Ascending aorta (tissue), 2 donors: ENCODE measurements at regions of chr3 and their contacts with region 1.

Region 1: GRCh38 chr3:72447059-72447946 is 400.9 kb downstream of the SHQ1 start:
- DNase-seq: peak; percentile 39 to 94
- H3K4me3 ChIP-seq: peak overlapping the region; percentile 67 to 91
- H3K27ac ChIP-seq: peak overlapping the region; percentile 68 to 88
- H3K4me1 ChIP-seq: peaks cover 0 to 13% of the 10 kb centered on the region in 2 donors
- H3K27me3 ChIP-seq: no peaks in the 10 kb centered on the region
- CTCF ChIP-seq: no peak

Region 2: GRCh38 chr3:71955240-71956068 is 491.8 kb before region 1 on chr3:
- intact Hi-C with region 1: loop called (anchors 10 kb)
- DNase-seq: peak in 1 of 2 donors; percentile 85
- H3K4me3 ChIP-seq: no peak overlapping the region
- H3K27ac ChIP-seq: no peak overlapping the region
- H3K4me1 ChIP-seq: peaks cover 0 to 2% of the 10 kb centered on the region in 2 donors
- H3K27me3 ChIP-seq: no peaks in the 10 kb centered on the region
- CTCF ChIP-seq: peak; percentile 69 to 89 (median 71)

Region 3: GRCh38 chr3:72255791-72256559 is 191.3 kb before region 1 on chr3:
- intact Hi-C with region 1: loop called (anchors 5 kb)
- DNase-seq: no peak
- H3K4me3 ChIP-seq: no peak overlapping the region
- H3K27ac ChIP-seq: peak overlapping the region in 1 of 2 donors; percentile 31
- H3K4me1 ChIP-seq: peaks cover 9 to 19% of the 10 kb centered on the region in 2 donors
- H3K27me3 ChIP-seq: no peaks in the 10 kb centered on the region
- CTCF ChIP-seq: no peak

Region 4: DNA sequence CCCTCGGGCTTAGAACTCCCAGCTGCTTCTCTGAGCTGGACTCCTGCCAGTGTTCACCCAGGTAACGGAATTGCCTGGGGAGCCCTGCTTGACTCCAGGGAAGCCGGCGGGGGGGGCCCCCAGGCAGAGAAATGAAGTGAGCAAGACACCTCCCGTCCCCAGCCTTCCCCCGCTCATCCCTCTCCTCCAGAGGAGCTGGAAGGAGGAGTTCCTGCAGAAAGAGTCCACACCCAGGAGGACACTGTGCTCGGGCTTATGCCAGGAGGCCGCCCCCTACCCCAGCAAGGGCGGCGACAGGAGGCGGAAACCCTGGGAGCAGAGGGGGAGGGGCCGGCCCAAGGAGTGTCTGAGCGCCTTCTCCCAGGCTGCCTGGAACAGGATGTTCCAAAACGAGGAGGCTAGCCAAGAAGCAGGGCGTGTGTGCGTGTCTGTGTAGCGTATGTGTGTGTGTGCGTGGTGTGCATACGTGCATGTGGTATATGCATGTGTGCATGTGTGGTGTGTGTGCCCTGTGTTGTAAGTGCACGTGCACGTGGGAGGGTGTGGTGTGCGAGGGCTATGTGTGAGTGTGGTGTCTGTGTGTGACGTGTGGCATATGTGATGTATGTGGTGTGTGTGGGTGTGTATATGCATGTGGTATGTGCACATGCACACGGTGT is 110.4 kb before region 1 on chr3:
- intact Hi-C with region 1: loop called (anchors 2 kb)
- DNase-seq: peak in 1 of 2 donors; percentile 78
- H3K4me3 ChIP-seq: no peak overlapping the region
- H3K27ac ChIP-seq: no peak overlapping the region
- H3K4me1 ChIP-seq: peaks cover 14 to 23% of the 10 kb centered on the region in 2 donors
- H3K27me3 ChIP-seq: no peaks in the 10 kb centered on the region
- CTCF ChIP-seq: no peak

Region 5: GRCh38 chr3:72482589-72483321 is 35.5 kb after region 1 on chr3:
- intact Hi-C with region 1: loop called (anchors 1 kb)
- DNase-seq: peak; percentile 56 to 93
- H3K4me3 ChIP-seq: peak overlapping the region; percentile 34 to 56
- H3K27ac ChIP-seq: peak overlapping the region; percentile 62 to 83
- H3K4me1 ChIP-seq: peaks cover 5 to 16% of the 10 kb centered on the region in 2 donors
- H3K27me3 ChIP-seq: no peaks in the 10 kb centered on the region
- CTCF ChIP-seq: no peak

Region 6: DNA sequence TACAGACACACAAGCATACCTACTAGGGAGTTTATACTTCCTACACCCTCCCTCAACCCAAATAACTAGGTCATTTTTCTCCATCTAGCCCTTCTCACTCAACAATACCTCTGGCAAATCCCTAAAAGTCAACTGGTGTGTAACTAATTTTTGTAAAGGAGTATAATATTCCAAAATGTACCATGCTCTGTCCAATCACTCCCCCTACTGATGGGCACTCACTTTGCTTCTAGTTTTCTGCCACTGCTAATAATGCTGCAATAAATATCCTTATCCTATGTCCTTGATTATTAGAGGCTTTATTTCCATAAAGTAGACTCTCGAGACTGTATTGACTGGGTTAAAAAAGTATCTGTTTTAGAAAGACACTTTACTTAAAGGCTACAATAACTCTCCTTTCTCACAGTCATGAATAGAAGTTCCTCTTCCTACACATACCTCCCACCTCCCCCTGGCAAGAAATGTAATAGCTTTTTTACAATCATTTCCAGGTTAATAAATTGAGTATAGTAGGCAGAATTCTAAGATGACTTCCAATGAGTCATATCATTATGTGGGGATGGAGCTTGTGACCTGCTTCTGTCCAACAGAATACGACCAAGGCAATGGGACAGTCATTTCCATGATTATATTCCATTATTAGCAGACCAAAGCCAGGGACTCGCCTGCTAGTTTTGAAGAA is 370.9 kb after region 1 on chr3:
- intact Hi-C with region 1: loop called (anchors 10 kb)
- DNase-seq: no peak
- H3K4me3 ChIP-seq: no peak overlapping the region
- H3K27ac ChIP-seq: peak overlapping the region in 1 of 2 donors; percentile 58
- H3K4me1 ChIP-seq: peaks cover 6 to 11% of the 10 kb centered on the region in 2 donors
- H3K27me3 ChIP-seq: no peaks in the 10 kb centered on the region
- CTCF ChIP-seq: peak in 2 of 3 experiments; percentile 23 to 58